ENCODE measurements at regions of chr16 and their contacts with region 1.

Region 1: DNA sequence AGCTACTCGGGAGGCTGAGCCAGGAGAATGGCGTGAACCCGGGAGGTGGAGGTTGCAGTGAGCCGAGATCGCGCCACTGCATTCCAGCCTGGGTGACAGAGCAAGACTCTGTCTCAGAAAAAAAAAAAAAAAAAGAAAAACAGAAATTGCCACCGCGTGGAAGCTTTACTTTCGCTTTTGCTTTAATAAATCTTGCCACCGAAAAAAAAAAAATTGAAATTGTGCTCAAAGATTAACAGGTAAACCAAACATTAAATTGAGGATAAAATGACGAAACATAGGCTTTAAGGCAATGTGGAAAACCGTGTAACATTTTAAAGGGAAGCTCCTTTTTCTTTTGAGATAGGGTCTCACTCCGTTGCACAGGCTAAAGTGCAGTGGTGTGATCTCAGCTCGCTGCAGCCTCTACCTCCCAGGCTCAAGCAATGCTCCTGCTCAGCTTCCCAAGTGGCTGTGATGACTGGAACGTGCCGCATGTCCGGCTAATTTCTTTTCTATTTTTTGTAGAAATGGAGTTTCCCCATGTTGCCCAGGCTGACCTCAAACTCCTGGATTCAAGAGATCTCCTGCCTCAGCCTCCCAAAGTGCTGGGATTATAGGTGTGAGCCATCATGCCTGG is 40.1 kb downstream of the ZNF276 start:
- DNase-seq: peak in 4 of 14 experiments; percentile 41 to 66 (median 49)
- ATAC-seq: peak; percentile 68
- H3K4me3 ChIP-seq: peak overlapping the region; percentile 48
- H3K4me3 Mint-ChIP-seq: peak overlapping the region; percentile 87
- H3K27ac ChIP-seq: peak overlapping the region in 1 of 2 donors; percentile 24
- H3K27ac Mint-ChIP-seq: peak overlapping the region; percentile 88
- H3K4me1 ChIP-seq: peaks cover 65% of the 10 kb centered on the region
- H3K4me1 Mint-ChIP-seq: peaks cover 29% of the 10 kb centered on the region
- H3K27me3 ChIP-seq: no peaks in the 10 kb centered on the region
- H3K27me3 Mint-ChIP-seq: no peaks in the 10 kb centered on the region
- CTCF ChIP-seq: no peak

Region 2: GRCh38 chr16:89442990-89443731 is 318.3 kb before region 1 on chr16:
- CTCF ChIA-PET with region 1: no interaction called
- POLR2A ChIA-PET with region 1: no interaction called
- intact Hi-C with region 1: no loop called
- DNase-seq: peak in 2 of 14 experiments; percentile 28 to 43
- ATAC-seq: peak; percentile 33
- H3K4me3 ChIP-seq: no peak overlapping the region
- H3K4me3 Mint-ChIP-seq: peak overlapping the region; percentile 75
- H3K27ac ChIP-seq: no peak overlapping the region
- H3K27ac Mint-ChIP-seq: peak overlapping the region; percentile 48
- H3K4me1 ChIP-seq: peaks cover 92% of the 10 kb centered on the region
- H3K4me1 Mint-ChIP-seq: peaks cover 22% of the 10 kb centered on the region
- H3K27me3 ChIP-seq: no peaks in the 10 kb centered on the region
- H3K27me3 Mint-ChIP-seq: no peaks in the 10 kb centered on the region
- CTCF ChIP-seq: no peak

Region 3: GRCh38 chr16:89737341-89738071 is 23.9 kb before region 1 on chr16:
- CTCF ChIA-PET with region 1: no interaction called
- POLR2A ChIA-PET with region 1: interaction called, 30 read pairs
- intact Hi-C with region 1: no loop called
- DNase-seq: peak in 13 of 14 experiments; percentile 28 to 86 (median 54)
- ATAC-seq: peak; percentile 79
- H3K4me3 ChIP-seq: no peak overlapping the region
- H3K4me3 Mint-ChIP-seq: peak overlapping the region; percentile 69
- H3K27ac ChIP-seq: no peak overlapping the region
- H3K27ac Mint-ChIP-seq: peak overlapping the region; percentile 80
- H3K4me1 ChIP-seq: peaks cover 69% of the 10 kb centered on the region
- H3K4me1 Mint-ChIP-seq: peaks cover 44% of the 10 kb centered on the region
- H3K27me3 ChIP-seq: no peaks in the 10 kb centered on the region
- H3K27me3 Mint-ChIP-seq: no peaks in the 10 kb centered on the region
- CTCF ChIP-seq: no peak

Measured in CD4-positive, alpha-beta T cell (primary cell).